Gastrocnemius medialis (tissue), 4 donors: ENCODE measurements at regions of chr22 and their contacts with region 1.

Region 1: GRCh38 chr22:26800858-26801257 is 143.5 kb downstream of the MIAT start:
- DNase-seq: no peak
- ATAC-seq: no peak
- H3K4me3 ChIP-seq: no peak overlapping the region
- H3K27ac ChIP-seq: no peak overlapping the region
- H3K4me1 ChIP-seq: no peaks in the 10 kb centered on the region
- H3K27me3 ChIP-seq: no peaks in the 10 kb centered on the region
- CTCF ChIP-seq: no peak
- POLR2A ChIP-seq: no peak

Region 2: GRCh38 chr22:26711205-26711963 is 89.5 kb before region 1 on chr22:
- in situ Hi-C with region 1: no loop called
- intact Hi-C with region 1: no loop called
- DNase-seq: peak in 1 of 2 donors; percentile 12
- ATAC-seq: no peak
- H3K4me3 ChIP-seq: no peak overlapping the region
- H3K27ac ChIP-seq: no peak overlapping the region
- H3K4me1 ChIP-seq: no peaks in the 10 kb centered on the region
- H3K27me3 ChIP-seq: no peaks in the 10 kb centered on the region
- CTCF ChIP-seq: no peak
- POLR2A ChIP-seq: no peak

Region 3: GRCh38 chr22:26842103-26842502 is 41.2 kb after region 1 on chr22:
- in situ Hi-C with region 1: no loop called
- intact Hi-C with region 1: loop called (anchors 5 kb)
- DNase-seq: no peak
- ATAC-seq: no peak
- H3K4me3 ChIP-seq: no peak overlapping the region
- H3K27ac ChIP-seq: no peak overlapping the region
- H3K4me1 ChIP-seq: no peaks in the 10 kb centered on the region
- H3K27me3 ChIP-seq: no peaks in the 10 kb centered on the region
- CTCF ChIP-seq: no peak
- POLR2A ChIP-seq: no peak

Region 4: GRCh38 chr22:26974914-26975803 is 174.3 kb after region 1 on chr22:
- in situ Hi-C with region 1: loop called in 1 of 4 experiments (anchors 10 kb)
- intact Hi-C with region 1: no loop called
- DNase-seq: no peak
- ATAC-seq: no peak
- H3K4me3 ChIP-seq: no peak overlapping the region
- H3K27ac ChIP-seq: no peak overlapping the region
- H3K4me1 ChIP-seq: no peaks in the 10 kb centered on the region
- H3K27me3 ChIP-seq: peaks cover 12 to 20% (median 19%) of the 10 kb centered on the region in 3 donors
- CTCF ChIP-seq: no peak
- POLR2A ChIP-seq: no peak